ENCODE measurements at regions of chr3 and their contacts with region 1.

Region 1: DNA sequence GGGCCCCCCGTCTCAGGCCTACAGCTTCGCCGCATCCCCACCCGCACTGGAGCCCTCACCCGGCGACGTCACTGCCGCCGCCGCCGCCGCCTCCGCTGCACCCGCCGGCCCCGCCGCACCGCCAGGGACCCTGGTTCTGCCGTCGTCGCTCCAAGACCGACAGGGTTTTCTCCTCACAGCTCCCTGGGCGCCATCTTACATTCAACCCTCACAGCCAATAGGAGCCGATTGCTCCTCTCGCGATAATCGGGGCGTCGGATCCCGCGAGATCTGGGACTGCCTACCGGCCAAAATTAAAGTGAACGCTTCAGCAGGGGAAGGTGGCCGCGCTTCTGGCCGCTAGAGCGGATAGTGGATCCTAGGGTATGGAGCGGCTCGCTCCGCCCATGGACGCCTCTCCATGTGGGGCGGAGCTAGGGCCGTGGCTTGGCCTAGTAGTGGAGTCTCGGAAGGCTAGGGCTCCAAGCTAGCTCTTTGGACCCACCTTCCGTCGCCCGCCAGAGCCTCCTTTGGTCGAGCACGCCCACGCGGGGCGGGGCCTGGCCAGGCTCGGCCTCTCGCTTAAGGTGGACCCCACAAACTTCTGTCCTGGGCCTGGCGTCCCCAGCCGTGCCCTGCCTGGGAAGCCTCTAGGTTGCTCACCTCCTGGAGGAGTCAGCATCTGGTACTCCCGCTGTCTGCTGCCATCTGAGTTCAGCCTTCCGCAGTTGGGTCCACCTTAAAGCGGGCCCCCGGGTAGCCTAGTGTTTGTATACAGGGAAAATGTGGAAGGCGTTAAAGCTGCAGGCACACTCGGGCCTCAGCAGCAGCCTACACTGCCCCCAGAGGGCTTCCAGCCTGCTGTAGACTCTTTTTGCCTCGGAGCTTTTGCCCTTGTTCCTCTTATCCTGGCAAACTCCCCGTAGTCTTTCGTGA is at the start of gene QRICH1:
- DNase-seq: peak; percentile 98
- H3K4me3 Mint-ChIP-seq: peak within 1 kb of the TSS; percentile 90
- H3K27ac Mint-ChIP-seq: peak within 1 kb of the TSS; percentile 95
- H3K4me1 Mint-ChIP-seq: peaks cover 35% of the 10 kb centered on the region
- H3K27me3 Mint-ChIP-seq: no peaks in the 10 kb centered on the region
- total RNA-seq, gene QRICH1: 124 to 128 TPM

Region 2: DNA sequence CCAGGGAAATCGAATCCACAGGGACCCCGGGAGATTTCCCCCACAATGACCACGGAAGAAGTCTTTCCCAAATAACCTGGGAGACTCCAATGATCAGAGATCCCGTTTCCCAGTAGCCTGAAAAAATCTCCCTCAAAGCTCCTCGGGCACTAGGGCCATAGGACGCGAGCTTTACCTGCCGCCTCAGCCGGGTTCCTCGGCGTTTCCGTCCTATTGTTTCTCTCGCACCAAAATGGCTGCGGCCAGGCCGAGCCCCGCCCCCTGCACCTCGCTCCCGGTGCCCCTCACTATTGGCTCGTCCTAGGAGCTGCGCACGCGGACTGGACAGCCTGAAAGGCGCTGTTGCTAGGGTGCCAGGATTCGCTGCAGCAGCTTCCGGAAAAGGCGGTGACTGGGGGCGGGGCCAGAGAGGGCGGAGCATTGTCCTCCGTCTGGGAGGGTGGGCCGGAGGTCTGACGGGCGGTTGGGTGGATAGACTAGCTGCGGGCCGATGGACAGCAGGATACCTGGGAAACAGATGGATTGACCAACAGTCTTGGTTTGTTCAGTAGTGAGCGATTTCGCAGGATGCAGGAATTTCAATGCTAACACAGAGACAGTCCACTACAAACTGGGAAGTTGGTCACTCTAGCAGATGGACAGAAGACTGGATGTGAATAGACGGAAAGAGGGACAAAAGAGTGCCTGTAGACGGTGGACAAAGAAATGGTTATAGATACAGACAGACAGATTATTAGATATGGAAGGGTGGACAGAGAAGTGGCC is 376.9 kb before region 1 on chr3 and contains the start of gene IP6K2:
- CTCF ChIA-PET with region 1: no interaction called
- POLR2A ChIA-PET with region 1: interaction called, 6 read pairs
- intact Hi-C with region 1: loop called (anchors 5 kb)
- DNase-seq: peak; percentile 100
- H3K4me3 Mint-ChIP-seq: peak within 1 kb of the TSS; percentile 96
- H3K27ac Mint-ChIP-seq: peak within 1 kb of the TSS; percentile 87
- H3K4me1 Mint-ChIP-seq: peaks cover 30% of the 10 kb centered on the region
- H3K27me3 Mint-ChIP-seq: no peaks in the 10 kb centered on the region
- total RNA-seq, gene IP6K2: 41.6 to 43.4 TPM

Region 3: GRCh38 chr3:48926425-48927392 is 167.4 kb before region 1 on chr3:
- CTCF ChIA-PET with region 1: no interaction called
- POLR2A ChIA-PET with region 1: no interaction called
- intact Hi-C with region 1: loop called (anchors 5 kb)
- DNase-seq: peak; percentile 68
- H3K4me3 Mint-ChIP-seq: peak overlapping the region; percentile 43
- H3K27ac Mint-ChIP-seq: peak overlapping the region; percentile 88
- H3K4me1 Mint-ChIP-seq: peaks cover 63% of the 10 kb centered on the region
- H3K27me3 Mint-ChIP-seq: no peaks in the 10 kb centered on the region

Region 4: GRCh38 chr3:49007068-49007770 is 86.9 kb before region 1 on chr3 and contains the start of gene WDR6:
- CTCF ChIA-PET with region 1: interaction called, 19 read pairs
- POLR2A ChIA-PET with region 1: interaction called, 15 read pairs
- intact Hi-C with region 1: loop called (anchors 1 kb)
- DNase-seq: peak; percentile 99
- H3K4me3 Mint-ChIP-seq: peak within 1 kb of the TSS; percentile 95
- H3K27ac Mint-ChIP-seq: peak within 1 kb of the TSS; percentile 98
- H3K4me1 Mint-ChIP-seq: peaks cover 21% of the 10 kb centered on the region
- H3K27me3 Mint-ChIP-seq: no peaks in the 10 kb centered on the region
- total RNA-seq, gene WDR6: 139 to 144 TPM

Region 5: DNA sequence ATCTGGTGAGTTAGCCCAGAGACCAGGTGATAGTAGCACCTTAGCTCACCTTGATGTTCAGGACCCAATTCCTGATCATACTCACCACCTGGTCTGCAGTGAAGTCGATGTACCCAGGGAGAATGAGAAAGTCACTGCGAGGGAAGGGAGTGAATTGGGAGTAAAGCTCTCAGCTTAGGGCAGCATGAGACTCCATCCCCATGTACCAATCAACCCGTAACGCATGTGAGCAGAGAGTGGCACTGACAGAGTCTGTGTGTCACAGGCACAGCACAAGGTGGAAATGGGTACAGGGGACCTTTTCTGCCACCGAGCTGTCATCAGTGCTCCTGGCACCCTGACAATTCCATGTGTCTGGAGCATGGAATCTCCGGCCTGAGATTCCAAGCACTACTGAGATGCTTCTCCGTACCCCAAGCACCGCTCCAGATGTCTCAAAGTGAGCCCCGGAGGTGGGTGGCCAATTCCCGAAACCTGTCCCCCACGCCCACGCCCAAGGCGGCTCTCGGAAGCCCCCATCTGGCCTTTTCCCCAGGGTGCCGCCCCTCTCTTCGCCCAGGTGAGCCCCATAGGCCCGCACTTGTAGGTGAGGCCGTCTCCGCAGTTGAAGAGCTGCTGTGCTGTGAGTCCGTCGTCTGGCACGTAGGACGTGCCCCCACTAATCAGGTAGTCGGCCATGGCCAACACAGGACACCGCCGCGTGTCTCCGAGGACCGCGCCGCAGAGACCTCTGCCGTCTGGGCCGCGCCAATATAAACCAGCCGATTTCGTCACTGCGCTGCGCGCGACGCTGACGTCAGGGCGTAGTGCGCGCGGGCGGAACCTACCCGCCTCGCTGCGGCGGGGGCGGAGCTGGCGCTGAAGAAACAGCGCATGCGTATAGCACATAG is 65.2 kb before region 1 on chr3 and contains the start of gene IMPDH2:
- CTCF ChIA-PET with region 1: interaction called, 5 read pairs
- POLR2A ChIA-PET with region 1: interaction called, 21 read pairs
- intact Hi-C with region 1: loop called (anchors 2 kb)
- DNase-seq: peak; percentile 95
- H3K4me3 Mint-ChIP-seq: peak within 1 kb of the TSS; percentile 86
- H3K27ac Mint-ChIP-seq: peak within 1 kb of the TSS; percentile 89
- H3K4me1 Mint-ChIP-seq: peaks cover 43% of the 10 kb centered on the region
- H3K27me3 Mint-ChIP-seq: no peaks in the 10 kb centered on the region
- total RNA-seq, gene IMPDH2: 430 to 454 TPM

Region 6: GRCh38 chr3:49120438-49121131 is 26.5 kb after region 1 on chr3 and contains the start of gene USP19:
- CTCF ChIA-PET with region 1: interaction called, 14 read pairs
- POLR2A ChIA-PET with region 1: interaction called, 20 read pairs
- intact Hi-C with region 1: loop called (anchors 1 kb)
- DNase-seq: peak; percentile 96
- H3K4me3 Mint-ChIP-seq: peak within 1 kb of the TSS; percentile 85
- H3K27ac Mint-ChIP-seq: peak within 1 kb of the TSS; percentile 86
- H3K4me1 Mint-ChIP-seq: peaks cover 16% of the 10 kb centered on the region
- H3K27me3 Mint-ChIP-seq: no peaks in the 10 kb centered on the region
- total RNA-seq, gene USP19: 44.1 to 45.3 TPM

Region 7: GRCh38 chr3:49339945-49340800 is 246.1 kb after region 1 on chr3 and contains the start of gene USP4:
- CTCF ChIA-PET with region 1: no interaction called
- POLR2A ChIA-PET with region 1: interaction called, 10 read pairs
- intact Hi-C with region 1: loop called (anchors 10 kb)
- DNase-seq: peak; percentile 97
- H3K4me3 Mint-ChIP-seq: peak within 1 kb of the TSS; percentile 96
- H3K27ac Mint-ChIP-seq: peak within 1 kb of the TSS; percentile 99
- H3K4me1 Mint-ChIP-seq: peaks cover 43% of the 10 kb centered on the region
- H3K27me3 Mint-ChIP-seq: no peaks in the 10 kb centered on the region
- total RNA-seq, gene USP4: 79.4 to 79.7 TPM

Region 8: GRCh38 chr3:49719214-49719884 is 625.2 kb after region 1 on chr3 and contains the start of gene AMIGO3:
- CTCF ChIA-PET with region 1: no interaction called
- POLR2A ChIA-PET with region 1: no interaction called
- intact Hi-C with region 1: no loop called
- DNase-seq: peak; percentile 94
- H3K4me3 Mint-ChIP-seq: peak within 1 kb of the TSS; percentile 76
- H3K27ac Mint-ChIP-seq: peak within 1 kb of the TSS; percentile 38
- H3K4me1 Mint-ChIP-seq: peaks cover 35% of the 10 kb centered on the region
- H3K27me3 Mint-ChIP-seq: no peaks in the 10 kb centered on the region
- total RNA-seq, gene AMIGO3: not detected

Region 9: DNA sequence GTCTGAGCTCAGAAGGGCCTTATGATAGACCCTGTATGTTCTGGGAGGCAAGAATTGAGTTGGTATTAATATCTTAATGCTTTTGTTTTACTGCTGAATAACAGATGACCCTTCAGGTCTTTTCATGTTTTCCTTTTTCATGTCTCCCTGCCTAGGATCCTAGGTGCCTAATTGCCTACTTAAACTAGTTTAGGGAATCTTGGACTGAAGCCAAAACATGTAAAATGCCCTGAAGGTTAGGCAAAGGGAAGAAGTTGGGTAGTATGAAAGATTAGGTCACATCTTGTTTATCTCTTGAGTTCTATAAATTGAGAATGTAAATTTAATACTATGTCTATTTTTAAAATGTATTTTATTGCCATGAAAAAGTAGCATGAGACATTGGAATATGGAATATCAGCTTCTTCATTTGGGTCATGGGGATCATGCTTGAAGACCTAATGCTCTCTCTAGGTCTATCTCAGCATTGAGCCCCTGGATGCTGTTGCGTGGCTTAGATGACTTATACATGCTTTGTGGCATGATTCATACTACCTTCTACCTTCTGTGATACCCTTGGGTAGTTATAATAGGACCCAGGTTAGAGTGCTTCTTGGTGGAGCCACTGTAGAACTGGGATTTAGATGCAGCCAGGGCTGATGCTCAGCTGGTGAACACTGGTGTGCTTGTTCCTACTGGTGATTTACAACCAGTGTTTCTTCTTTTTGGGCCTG is 872.3 kb after region 1 on chr3:
- CTCF ChIA-PET with region 1: no interaction called
- POLR2A ChIA-PET with region 1: no interaction called
- intact Hi-C with region 1: no loop called
- DNase-seq: no peak
- H3K4me3 Mint-ChIP-seq: no peak overlapping the region
- H3K27ac Mint-ChIP-seq: no peak overlapping the region
- H3K4me1 Mint-ChIP-seq: peaks cover 2% of the 10 kb centered on the region
- H3K27me3 Mint-ChIP-seq: no peaks in the 10 kb centered on the region